ENCODE measurements at regions of chr2 and their contacts with region 1.

Region 1: DNA sequence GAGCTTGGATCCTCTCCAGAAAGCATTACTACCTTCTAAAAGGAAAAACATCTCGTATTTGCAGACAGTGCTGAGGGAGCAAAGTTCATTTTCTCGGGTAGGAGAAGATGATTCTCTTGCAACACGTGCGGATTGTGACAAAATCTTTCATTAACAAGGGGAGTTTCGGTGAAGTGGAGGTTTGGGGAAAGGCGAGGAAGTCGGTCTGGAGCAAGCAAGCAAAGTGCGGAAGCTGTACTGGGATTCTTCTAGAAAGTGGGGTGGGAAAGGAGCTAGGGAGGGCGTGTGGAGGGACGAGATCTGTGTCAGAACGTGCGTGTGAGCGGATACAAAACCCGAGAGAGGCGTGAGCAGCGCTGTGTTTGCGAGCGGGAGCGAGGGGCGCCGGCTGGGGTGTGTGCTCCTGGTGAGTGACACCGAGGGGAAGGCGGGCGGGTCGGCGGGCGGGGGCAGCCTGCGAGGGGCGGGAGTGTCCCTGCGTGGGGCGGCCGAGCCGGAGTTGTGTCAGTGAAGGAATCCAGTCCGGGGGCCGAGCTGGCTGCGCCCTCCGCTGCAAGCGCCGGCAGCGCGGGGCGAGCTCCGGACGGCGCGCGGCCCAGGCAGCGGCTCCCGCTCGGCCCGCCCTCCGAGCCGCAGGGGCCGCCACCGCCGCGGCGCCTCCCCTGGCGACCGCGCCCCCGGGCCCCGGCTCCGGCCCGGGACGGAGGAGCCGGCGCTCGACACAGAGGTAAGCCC is at the start of gene SPATS2L:
- DNase-seq: peak; percentile 59 to 88 (median 72)
- H3K4me3 ChIP-seq: peak within 1 kb of the TSS; percentile 66 to 98 (median 83)
- H3K27ac ChIP-seq: peak within 1 kb of the TSS; percentile 71 to 99 (median 94)
- H3K27me3 ChIP-seq: no peaks in the 10 kb centered on the region
- CTCF ChIP-seq: peak in 2 of 56 donors; percentile 9 to 24
- total RNA-seq, gene SPATS2L: 43.6 to 101 (median 74.3) TPM

Region 2: GRCh38 chr2:199979832-199980628 is 326.3 kb before region 1 on chr2:
- intact Hi-C with region 1: loop called in 1 of 2 experiments (anchors 2 kb)
- DNase-seq: peak; percentile 78 to 95 (median 89)
- H3K4me3 ChIP-seq: peak overlapping the region in 55 of 59 donors; percentile 11 to 66 (median 43)
- H3K27ac ChIP-seq: peak overlapping the region in 15 of 59 donors; percentile 1 to 65 (median 24)
- H3K27me3 ChIP-seq: no peaks in the 10 kb centered on the region
- CTCF ChIP-seq: peak; percentile 85 to 99 (median 94)

Region 3: DNA sequence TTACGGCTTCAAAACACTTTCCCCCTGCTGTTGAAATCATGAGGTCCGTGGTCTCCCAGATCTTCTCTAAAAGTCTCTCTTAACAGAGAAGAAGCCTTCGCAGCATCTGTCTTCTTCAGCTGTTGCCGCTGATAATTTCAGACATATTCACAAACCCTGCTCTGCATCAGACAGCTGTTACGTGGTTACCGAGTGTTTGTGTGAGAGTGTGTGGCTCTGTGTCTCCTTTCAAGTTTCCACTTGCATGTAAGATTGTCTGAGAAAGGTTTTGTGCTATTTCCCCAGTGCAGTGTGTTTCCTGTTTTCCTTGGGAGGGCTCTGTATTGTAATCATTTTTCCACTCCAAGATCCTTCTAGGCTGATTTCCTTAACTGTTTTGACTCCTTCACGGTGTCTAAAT is 318.2 kb before region 1 on chr2:
- intact Hi-C with region 1: loop called in 1 of 2 experiments (anchors 2 kb)
- DNase-seq: peak in 1 of 10 donors; percentile 37
- H3K4me3 ChIP-seq: peak overlapping the region in 7 of 59 donors; percentile 1 to 28 (median 11)
- H3K27ac ChIP-seq: peak overlapping the region in 33 of 59 donors; percentile 0 to 67 (median 35)
- H3K27me3 ChIP-seq: no peaks in the 10 kb centered on the region
- CTCF ChIP-seq: no peak

Region 4: DNA sequence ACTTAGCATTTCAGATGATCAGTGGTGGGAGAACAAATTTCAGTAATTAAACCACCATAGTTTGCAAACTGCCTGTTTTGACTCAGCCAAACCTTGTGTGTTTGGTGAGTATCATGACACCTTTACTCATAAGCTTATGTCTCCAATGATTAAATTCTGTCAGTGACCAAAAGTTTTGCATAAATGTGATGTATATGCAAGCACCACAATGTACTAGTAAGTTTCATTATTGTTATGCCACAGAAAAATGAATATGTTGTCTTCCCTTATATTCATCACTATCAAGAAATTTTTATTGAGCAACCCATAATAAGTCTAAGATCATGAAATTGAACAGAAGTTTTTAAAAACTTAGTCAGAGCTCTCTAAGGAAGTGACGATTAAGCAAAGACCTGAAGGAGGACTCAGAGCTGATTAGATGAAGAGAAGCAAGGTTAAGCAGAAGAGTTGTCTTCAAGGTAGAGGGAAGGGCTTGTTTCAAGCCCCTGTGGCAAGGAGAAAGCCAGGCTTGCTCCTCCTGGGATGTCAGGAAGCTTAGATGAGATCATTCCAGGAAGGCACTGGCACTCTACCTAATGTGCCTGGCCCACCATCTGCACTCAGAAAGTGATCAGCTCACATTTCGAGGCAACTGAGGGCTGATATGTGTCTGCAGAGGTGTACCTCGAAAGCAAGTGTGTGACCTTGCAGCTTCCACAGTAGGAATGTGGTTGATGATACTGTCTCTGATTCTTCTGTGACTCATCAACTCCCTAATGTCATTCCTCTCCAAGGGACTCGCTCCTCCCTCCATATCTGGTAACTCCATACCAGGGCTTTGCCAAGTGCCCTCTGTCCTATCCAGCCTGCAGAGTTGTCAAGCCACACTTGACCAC is 148.8 kb after region 1 on chr2:
- intact Hi-C with region 1: loop called in 1 of 2 experiments (anchors 5 kb)
- DNase-seq: no peak
- H3K4me3 ChIP-seq: no peak overlapping the region
- H3K27ac ChIP-seq: peak overlapping the region in 44 of 59 donors; percentile 10 to 89 (median 75)
- H3K27me3 ChIP-seq: no peaks in the 10 kb centered on the region
- CTCF ChIP-seq: no peak

Region 5: GRCh38 chr2:200471324-200471848 is 165.0 kb after region 1 on chr2:
- intact Hi-C with region 1: loop called (anchors 2 to 5 kb)
- DNase-seq: peak in 5 of 10 donors; percentile 48 to 57 (median 55)
- H3K4me3 ChIP-seq: peak overlapping the region in 2 of 59 donors; percentile 45
- H3K27ac ChIP-seq: peak overlapping the region; percentile 23 to 99 (median 94)
- H3K27me3 ChIP-seq: no peaks in the 10 kb centered on the region
- CTCF ChIP-seq: peak; percentile 23 to 82 (median 70)

Region 6: DNA sequence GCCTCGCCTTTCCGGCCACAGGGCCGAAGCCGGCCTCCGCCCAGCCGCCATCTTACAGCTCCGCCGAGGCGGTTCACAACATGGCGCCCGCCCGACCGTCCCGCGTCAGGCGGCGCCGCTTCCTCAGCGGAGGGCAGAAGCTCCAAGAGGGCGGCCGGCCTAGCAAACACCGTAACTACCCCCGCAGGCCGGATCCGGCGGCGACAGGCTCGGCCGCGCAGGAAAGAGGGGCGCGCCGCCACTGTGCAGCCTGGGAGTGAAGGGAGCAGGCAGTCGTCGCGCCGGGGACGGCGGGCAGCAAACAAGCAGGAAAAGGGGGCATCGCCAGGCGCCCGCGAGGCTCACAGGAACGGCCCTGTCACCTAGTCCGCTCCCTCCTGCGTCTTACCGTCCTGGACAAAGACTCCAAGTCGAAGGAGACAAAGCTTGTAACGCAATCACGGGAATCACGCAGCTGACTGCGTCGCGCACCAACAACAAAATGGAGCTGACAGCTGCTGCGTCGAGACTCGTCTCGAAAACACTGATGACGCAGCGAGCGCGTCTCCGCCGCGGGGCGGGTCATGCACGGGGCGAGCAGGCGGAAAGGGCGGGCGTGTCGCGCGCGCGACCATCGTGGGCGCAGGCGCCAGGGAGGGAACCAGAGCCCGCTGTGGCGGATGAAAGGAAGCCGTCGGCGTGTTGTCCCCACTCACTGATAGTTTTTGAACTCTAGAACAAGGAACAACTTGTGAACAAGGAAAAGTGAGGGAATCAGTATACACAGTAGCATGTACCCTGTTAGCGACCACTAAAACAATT is 558.0 kb after region 1 on chr2 and contains the start of gene CLK1:
- intact Hi-C with region 1: loop called in 1 of 2 experiments (anchors 5 kb)
- DNase-seq: peak; percentile 93 to 97 (median 95)
- H3K4me3 ChIP-seq: peak within 1 kb of the TSS; percentile 51 to 100 (median 94)
- H3K27ac ChIP-seq: peak within 1 kb of the TSS; percentile 99 to 100 (median 100)
- H3K27me3 ChIP-seq: no peaks in the 10 kb centered on the region
- CTCF ChIP-seq: peak in 12 of 56 donors; percentile 4 to 42 (median 12)
- total RNA-seq, gene CLK1: 115 to 437 (median 174) TPM